Activated CD4-positive, alpha-beta T cell treated with anti-CD3 and anti-CD28 coated beads for 36 hours (primary cell): ENCODE measurements at regions of chr6 and their contacts with region 1.

Region 1: GRCh38 chr6:29705389-29706231 is 17.6 kb upstream of the HLA-F start:
- DNase-seq: no peak
- ATAC-seq: no peak
- H3K4me3 Mint-ChIP-seq: no peak overlapping the region
- H3K27ac Mint-ChIP-seq: no peak overlapping the region
- H3K4me1 Mint-ChIP-seq: peaks cover 47% of the 10 kb centered on the region
- H3K27me3 Mint-ChIP-seq: peaks cover 10% of the 10 kb centered on the region

Region 2: GRCh38 chr6:29752451-29753308 is 47.1 kb after region 1 on chr6:
- CTCF ChIA-PET with region 1: interaction called, 8 read pairs
- POLR2A ChIA-PET with region 1: no interaction called
- intact Hi-C with region 1: loop called (anchors 1 kb)
- DNase-seq: peak; percentile 93
- ATAC-seq: peak; percentile 80
- H3K4me3 Mint-ChIP-seq: peak overlapping the region; percentile 83
- H3K27ac Mint-ChIP-seq: peak overlapping the region; percentile 89
- H3K4me1 Mint-ChIP-seq: peaks cover 23% of the 10 kb centered on the region
- H3K27me3 Mint-ChIP-seq: no peaks in the 10 kb centered on the region

Region 3: GRCh38 chr6:29777310-29777709 is 71.7 kb after region 1 on chr6:
- CTCF ChIA-PET with region 1: no interaction called
- POLR2A ChIA-PET with region 1: no interaction called
- intact Hi-C with region 1: no loop called
- DNase-seq: no peak
- ATAC-seq: no peak
- H3K4me3 Mint-ChIP-seq: no peak overlapping the region
- H3K27ac Mint-ChIP-seq: no peak overlapping the region
- H3K4me1 Mint-ChIP-seq: no peaks in the 10 kb centered on the region
- H3K27me3 Mint-ChIP-seq: peaks cover 32% of the 10 kb centered on the region

Region 4: DNA sequence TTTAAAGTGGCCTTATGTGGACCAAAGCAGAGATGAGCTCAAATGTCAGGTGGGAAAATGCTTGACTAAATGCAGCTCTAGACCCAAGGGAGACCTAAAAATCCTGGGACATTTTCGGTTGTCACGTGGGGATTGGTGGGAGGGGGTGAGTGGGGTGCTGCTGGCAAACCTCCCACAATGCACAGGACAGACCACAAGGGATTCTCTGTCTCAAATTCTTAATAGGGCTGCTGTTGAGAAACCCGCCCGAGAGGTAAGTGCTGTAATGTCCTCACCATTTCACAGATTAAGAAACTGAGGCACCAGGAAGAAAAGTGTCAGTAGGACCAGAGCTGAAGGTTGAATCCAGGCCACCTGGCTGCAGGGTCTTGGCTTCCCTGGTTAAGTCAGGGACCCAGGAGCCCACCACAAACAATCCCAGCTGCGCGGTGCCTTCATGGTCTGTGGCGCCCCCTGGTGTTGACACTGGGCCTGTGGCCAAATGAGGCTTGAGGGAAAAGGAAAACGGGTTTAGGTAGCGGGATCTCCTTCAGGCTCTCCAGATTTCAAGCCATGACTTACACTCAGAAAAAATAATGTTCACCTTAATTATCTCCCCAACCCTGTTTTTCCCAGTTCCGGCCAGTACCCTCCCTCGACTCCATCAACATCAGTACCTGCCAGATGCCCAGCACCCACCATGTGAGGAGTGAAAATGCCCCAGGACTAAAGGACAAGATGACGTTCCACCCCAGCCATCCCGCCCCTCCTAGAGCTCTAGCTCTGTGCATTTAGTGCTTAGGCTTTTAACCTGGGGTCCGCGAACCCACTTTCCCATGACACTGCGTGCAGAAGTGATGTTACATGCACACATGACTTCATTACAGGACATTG is 129.2 kb after region 1 on chr6:
- CTCF ChIA-PET with region 1: interaction called, 14 read pairs
- POLR2A ChIA-PET with region 1: no interaction called
- intact Hi-C with region 1: loop called (anchors 1 kb)
- DNase-seq: peak; percentile 72
- ATAC-seq: no peak
- H3K4me3 Mint-ChIP-seq: no peak overlapping the region
- H3K27ac Mint-ChIP-seq: no peak overlapping the region
- H3K4me1 Mint-ChIP-seq: peaks cover 2% of the 10 kb centered on the region
- H3K27me3 Mint-ChIP-seq: peaks cover 44% of the 10 kb centered on the region

Region 5: DNA sequence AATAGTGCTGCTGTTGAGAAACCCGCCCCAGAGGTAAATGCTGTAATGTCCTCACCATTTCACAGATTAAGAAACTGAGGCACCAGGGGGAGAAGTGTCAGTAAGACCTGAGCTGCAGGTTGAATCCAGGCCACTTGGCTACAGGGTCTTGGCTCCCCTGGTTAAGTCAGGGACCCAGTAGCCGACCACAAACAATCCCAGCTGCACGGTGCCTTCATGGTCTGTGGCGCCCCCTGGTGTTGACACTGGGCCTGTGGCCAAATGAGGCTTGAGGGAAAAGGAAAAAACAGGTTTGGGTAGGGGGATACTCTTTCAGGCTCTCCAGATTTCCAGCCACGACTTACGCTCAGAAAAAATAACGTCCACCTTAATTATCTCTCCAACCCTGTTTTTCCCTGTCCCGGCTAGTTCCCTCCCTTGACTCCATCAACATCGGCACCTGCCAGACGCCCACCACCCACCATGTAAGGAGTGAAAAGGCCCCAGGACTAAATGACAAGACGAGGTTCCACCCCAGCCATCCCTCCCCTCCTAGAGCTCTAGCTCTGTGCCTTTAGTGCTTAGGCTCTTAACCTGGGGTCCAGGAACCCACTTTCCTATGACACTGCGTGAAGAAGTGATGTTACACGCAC is 307.8 kb after region 1 on chr6:
- CTCF ChIA-PET with region 1: no interaction called
- POLR2A ChIA-PET with region 1: no interaction called
- intact Hi-C with region 1: loop called in 1 of 2 experiments (anchors 2 kb)
- DNase-seq: peak; percentile 67
- ATAC-seq: no peak
- H3K4me3 Mint-ChIP-seq: no peak overlapping the region
- H3K27ac Mint-ChIP-seq: no peak overlapping the region
- H3K4me1 Mint-ChIP-seq: no peaks in the 10 kb centered on the region
- H3K27me3 Mint-ChIP-seq: peaks cover 6% of the 10 kb centered on the region